ACHN (cell line): ENCODE measurements at regions of chr10 and their contacts with region 1.

Region 1: GRCh38 chr10:63217120-63217605 is 84.0 kb downstream of the NRBF2 start:
- DNase-seq: peak; percentile 80

Region 2: DNA sequence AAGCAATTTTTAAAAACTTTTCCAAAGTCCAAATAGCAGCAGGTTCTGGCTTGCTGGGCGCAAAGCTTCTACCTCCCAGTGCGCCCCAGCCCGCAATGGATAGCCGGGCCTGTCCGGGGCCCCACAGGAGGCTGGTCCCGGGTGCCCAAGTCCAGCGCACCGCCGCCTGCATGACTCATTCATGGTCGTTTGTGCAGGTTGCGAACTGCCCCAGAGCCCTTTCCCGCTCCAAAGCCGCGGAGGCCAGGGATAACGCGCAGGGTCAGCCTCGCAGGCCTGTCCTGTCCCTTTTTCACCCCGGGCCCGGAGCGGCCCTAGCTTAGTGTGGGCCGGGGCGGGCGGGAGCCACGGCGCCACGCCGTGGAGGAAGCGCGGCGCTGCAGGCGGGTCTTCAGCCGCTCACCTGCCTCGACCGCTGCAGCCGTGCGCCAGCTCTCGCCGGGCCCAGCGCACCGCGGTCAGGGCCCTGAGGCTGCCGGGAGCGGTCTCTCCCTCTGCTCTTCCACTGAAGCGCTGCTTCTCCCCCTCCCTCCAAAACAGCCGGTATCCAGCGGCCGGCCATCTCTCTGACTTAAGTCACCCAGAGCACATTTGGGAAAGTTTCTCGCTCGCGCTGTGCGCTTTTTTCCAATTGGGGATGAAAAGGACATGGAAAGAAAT is 399.3 kb before region 1 on chr10:
- in situ Hi-C with region 1: no loop called
- DNase-seq: peak; percentile 81

Region 3: DNA sequence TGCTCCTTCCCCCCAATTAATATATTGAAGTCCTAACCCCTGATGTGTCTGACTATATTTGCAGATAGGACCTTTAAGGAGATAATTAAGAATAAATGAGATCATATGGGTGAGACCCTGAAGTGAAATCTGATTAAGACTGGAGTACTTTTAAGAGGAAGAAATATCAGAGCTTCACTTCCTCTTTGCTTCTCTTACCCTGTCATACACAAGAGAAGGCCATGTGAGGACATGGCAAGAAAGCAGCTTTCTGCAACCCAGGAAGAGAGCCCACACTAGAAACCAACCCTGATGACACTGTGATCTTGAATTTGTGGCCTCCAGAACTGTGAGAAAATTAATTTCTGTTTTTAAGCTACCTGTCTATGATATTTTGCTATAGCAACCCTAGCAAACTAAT is 204.4 kb after region 1 on chr10:
- in situ Hi-C with region 1: no loop called
- DNase-seq: no peak

Region 4: DNA sequence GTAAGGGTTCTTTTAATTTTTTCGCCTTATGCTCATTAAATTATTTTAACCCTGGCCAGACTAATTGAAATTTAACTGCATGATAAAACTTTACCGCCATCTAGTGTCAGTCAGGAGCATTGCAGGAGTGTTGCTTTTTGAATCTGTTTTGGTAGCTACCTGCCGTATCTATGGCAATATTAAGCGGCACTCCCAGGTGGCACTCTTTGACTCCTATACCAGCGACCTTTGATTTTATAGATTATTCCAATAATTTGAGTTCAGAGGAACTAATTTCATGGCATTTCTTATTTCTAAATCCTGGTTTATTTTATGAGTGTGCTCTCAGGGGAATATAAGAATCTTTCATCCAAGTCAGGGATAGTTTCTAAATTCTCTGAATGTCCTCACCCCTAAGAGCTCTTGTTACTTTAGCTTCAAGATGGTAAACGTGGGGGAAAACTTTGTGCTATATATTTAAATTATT is 502.9 kb after region 1 on chr10:
- in situ Hi-C with region 1: loop called (anchors 25 kb)
- DNase-seq: peak; percentile 54